ENCODE measurements at regions of chr1 and their contacts with region 1.

Region 1: GRCh38 chr1:119906927-119907652 is 10.8 kb upstream of the ADAM30 start:
- DNase-seq: no peak
- H3K4me3 ChIP-seq: no peak overlapping the region
- H3K27ac ChIP-seq: no peak overlapping the region
- H3K4me1 ChIP-seq: peaks cover 0 to 4% (median 0%) of the 10 kb centered on the region in 4 experiments; a peak in 1 of 7 replicates
- H3K27me3 ChIP-seq: no peaks in the 10 kb centered on the region; a peak in 1 of 7 replicates
- CTCF ChIP-seq: no peak
- EP300 ChIP-seq: no peak
- POLR2A ChIP-seq: no peak
- RAD21 ChIP-seq: no peak

Region 2: DNA sequence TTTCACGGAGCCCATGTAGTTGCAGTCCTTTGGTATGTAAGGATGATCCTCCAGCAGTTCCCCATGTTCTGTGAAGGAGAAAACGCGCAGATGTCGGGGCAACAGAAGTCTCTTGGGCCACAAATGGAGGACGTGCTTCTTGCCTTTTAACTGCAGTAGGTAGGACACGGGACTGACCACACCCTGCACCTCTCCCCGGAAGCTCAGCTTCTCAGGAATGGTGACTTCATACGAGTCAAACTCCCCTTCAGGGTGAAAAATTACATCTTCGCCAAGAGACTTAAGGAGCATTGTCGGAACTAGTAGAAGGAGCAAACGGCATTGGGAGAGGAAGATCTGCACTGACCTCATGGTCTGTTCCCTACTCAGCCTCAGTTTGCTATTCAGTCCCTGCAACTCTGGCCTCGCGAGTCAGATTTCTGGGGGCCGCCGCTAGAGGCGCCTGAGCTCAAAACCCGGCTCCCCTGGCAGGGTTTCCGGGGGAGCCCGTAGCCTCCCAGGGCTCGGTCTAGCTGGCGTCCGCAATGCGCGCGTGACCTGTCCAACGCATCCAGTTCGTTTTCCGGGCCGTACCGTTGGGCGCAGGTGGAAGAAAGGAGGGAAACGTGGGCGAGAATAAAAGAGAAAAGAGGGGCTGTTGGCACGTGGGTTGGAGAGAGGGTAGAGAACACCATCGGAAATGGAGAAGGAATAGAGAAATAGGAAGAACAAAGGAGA is 10.9 kb before region 1 on chr1 and contains the start of gene ADAM30:
- CTCF ChIA-PET with region 1: interaction called, 11 read pairs
- POLR2A ChIA-PET with region 1: no interaction called
- DNase-seq: peak in 1 of 2 experiments; percentile 86
- H3K4me3 ChIP-seq: 0 out of 8 replicates have a peak within 1 kb of the TSS, but pooled peaks of 1 of the 4 experiments have one; percentile 4
- H3K27ac ChIP-seq: no peak within 1 kb of the TSS
- H3K4me1 ChIP-seq: no peaks in the 10 kb centered on the region
- H3K27me3 ChIP-seq: peaks cover 0 to 8% (median 7%) of the 10 kb centered on the region in 4 experiments; a peak in 6 of 7 replicates
- CTCF ChIP-seq: peak; percentile 63 to 67 (median 65)
- EP300 ChIP-seq: no peak
- POLR2A ChIP-seq: no peak
- RAD21 ChIP-seq: peak; percentile 28 to 56; a peak in 2 of 4 replicates
- total RNA-seq, gene ADAM30: not detected in 2 replicates

Measured in H1 (cell line).